Right cardiac atrium (tissue), 5 donors: ENCODE measurements at regions of chr1 and their contacts with region 1.

Region 1: GRCh38 chr1:65958561-65959350 is 166.1 kb downstream of the PDE4B start:
- DNase-seq: peak in 2 of 3 donors; percentile 13 to 73
- ATAC-seq: peak in 1 of 2 donors; percentile 59
- H3K4me3 ChIP-seq: no peak overlapping the region
- H3K27ac ChIP-seq: no peak overlapping the region
- H3K4me1 ChIP-seq: no peaks in the 10 kb centered on the region
- H3K27me3 ChIP-seq: no peaks in the 10 kb centered on the region

Region 2: GRCh38 chr1:65979136-65980044 is 20.6 kb after region 1 on chr1:
- intact Hi-C with region 1: no loop called
- DNase-seq: peak in 1 of 3 donors; percentile 49
- ATAC-seq: peak in 1 of 2 donors; percentile 64
- H3K4me3 ChIP-seq: no peak overlapping the region
- H3K27ac ChIP-seq: no peak overlapping the region
- H3K4me1 ChIP-seq: no peaks in the 10 kb centered on the region
- H3K27me3 ChIP-seq: no peaks in the 10 kb centered on the region

Region 3: DNA sequence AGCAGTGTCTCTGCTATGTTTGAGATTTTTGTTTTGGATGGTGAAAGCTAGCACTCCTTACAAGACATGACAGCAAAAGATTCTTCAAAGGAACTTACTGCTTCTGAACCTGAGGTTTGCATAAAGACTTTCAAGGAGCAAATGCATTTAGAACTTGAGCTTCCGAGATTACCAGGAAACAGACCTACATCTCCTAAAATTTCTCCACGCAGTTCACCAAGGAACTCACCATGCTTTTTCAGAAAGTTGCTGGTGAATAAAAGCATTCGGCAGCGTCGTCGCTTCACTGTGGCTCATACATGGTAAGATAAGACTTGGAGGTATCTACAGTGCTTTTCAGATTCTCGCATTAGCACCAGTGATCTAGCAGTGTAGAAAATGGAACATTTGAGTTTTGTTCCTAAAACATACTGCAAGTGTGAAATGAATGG is 34.1 kb after region 1 on chr1:
- intact Hi-C with region 1: no loop called
- DNase-seq: no peak
- ATAC-seq: no peak
- H3K4me3 ChIP-seq: no peak overlapping the region
- H3K27ac ChIP-seq: no peak overlapping the region
- H3K4me1 ChIP-seq: no peaks in the 10 kb centered on the region
- H3K27me3 ChIP-seq: no peaks in the 10 kb centered on the region

Region 4: GRCh38 chr1:66242646-66243547 is 284.1 kb after region 1 on chr1:
- intact Hi-C with region 1: loop called (anchors 2 to 5 kb)
- DNase-seq: peak; percentile 88 to 96 (median 93)
- ATAC-seq: peak; percentile 96 to 97
- H3K4me3 ChIP-seq: no peak overlapping the region
- H3K27ac ChIP-seq: no peak overlapping the region
- H3K4me1 ChIP-seq: no peaks in the 10 kb centered on the region
- H3K27me3 ChIP-seq: no peaks in the 10 kb centered on the region